WTC11 (cell line): ENCODE measurements at regions of chr5 and their contacts with region 1.

Region 1: GRCh38 chr5:76483433-76483832 is 80.3 kb downstream of the IQGAP2 start:
- DNase-seq: peak; percentile 29
- ATAC-seq: peak; percentile 85
- H3K4me3 Mint-ChIP-seq: no peak overlapping the region
- H3K27ac Mint-ChIP-seq: peak overlapping the region; percentile 79; the same call in 1 of the 2 replicates
- H3K4me1 Mint-ChIP-seq: peaks cover 79% of the 10 kb centered on the region
- H3K27me3 Mint-ChIP-seq: no peaks in the 10 kb centered on the region
- CTCF ChIP-seq: no peak

Region 2: DNA sequence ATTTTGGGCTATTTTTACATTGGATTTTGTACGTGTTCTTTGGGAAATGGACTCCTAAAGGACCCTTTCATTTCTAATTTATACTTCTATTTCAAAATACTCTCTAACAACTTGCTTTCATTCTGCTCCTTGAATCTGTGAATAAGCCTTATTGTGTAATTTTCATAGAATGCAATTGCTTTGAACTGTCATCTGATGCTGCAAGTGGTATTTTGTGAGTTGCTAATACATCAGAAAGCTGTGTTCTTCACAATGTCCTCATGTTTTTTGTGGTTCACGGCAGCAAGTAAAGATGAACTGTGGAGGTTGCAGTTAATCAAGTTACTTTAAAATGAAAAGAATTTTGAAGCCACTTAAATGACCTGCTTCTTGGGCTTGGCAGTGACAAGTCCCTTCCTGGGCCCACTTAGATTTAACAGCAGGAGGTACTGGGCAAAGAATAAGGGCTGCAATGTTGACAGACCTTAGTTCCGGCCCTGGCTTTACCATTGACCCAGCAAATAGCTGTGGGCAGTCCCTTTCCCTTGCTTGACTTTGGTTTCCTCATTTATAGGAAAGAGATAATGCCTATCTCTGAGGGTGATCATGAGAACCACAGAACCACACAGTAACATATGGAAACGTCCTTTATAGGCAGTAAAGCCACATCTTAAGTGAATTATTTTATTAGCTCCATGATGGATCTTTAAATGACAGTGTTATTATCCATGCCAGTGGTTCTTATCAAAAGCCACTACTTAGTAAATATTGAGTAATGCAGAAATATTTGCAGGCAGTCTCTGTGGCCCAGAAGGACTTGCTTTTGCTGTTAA is 25.6 kb before region 1 on chr5:
- CTCF ChIA-PET with region 1: no interaction called
- POLR2A ChIA-PET with region 1: no interaction called
- DNase-seq: no peak
- ATAC-seq: peak; percentile 74
- H3K4me3 Mint-ChIP-seq: no peak overlapping the region
- H3K27ac Mint-ChIP-seq: peak overlapping the region; percentile 80
- H3K4me1 Mint-ChIP-seq: peaks cover 53% of the 10 kb centered on the region
- H3K27me3 Mint-ChIP-seq: no peaks in the 10 kb centered on the region
- CTCF ChIP-seq: no peak

Region 3: DNA sequence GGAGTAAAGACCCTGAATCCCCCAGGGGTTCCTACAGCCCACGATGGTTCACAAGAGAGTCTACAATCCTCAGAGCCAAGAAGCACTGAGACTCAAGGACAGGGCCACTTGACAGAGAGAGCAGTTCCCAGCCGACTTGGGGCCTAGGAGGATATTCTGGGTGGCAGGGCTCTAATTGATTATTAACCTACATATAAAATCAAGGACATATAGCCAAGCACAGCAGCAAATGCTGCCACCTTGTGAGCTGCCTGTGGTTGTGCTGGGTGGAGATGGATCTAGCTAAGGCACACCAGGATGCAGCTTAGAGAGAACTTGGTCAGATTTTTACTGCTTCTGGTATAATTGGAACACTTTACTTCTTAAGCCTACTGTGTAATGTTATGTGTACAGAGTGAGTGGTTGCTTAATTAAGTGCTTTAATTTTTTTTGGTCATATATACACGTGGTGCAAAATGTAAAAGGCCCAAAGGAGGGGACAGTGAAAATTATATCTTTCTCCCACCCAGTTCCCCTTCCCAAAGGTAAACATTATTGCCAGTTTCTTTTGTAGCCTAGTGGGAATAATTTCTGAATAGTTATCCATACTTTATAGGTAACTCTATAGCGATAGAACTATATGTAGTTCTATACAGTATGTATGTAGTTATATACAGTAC is 61.0 kb after region 1 on chr5:
- CTCF ChIA-PET with region 1: interaction called, 10 read pairs
- POLR2A ChIA-PET with region 1: no interaction called
- DNase-seq: peak; percentile 54
- ATAC-seq: peak; percentile 88
- H3K4me3 Mint-ChIP-seq: no peak overlapping the region
- H3K27ac Mint-ChIP-seq: no peak overlapping the region
- H3K4me1 Mint-ChIP-seq: peaks cover 44% of the 10 kb centered on the region
- H3K27me3 Mint-ChIP-seq: no peaks in the 10 kb centered on the region
- CTCF ChIP-seq: 0 out of 2 replicates have a peak, but pooled peaks have one; percentile 26